ENCODE measurements at regions of chr5 and their contacts with region 1.

Region 1: DNA sequence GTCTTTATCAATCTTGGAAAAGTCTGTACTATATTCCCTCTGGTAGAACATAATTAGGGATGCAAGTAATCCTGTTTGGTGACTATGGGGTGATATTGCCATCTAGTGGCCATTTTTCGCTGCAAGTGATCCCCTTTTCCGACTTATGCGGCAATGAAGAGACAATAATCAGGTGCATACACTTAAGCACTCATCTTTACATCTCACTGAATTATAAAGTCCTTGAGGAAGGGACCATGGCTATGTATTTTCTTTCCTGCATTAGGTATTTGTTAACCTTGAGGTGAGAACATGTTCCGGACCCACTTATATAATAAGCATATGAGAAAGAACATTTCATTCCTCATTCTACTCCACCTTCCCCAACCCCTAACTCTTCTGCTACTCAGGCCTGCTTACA is 19.6 kb upstream of the LIX1 start:
- DNase-seq: peak; percentile 80
- H3K4me3 Mint-ChIP-seq: no peak overlapping the region
- H3K27ac Mint-ChIP-seq: no peak overlapping the region
- H3K4me1 Mint-ChIP-seq: peaks cover 5% of the 10 kb centered on the region
- H3K27me3 Mint-ChIP-seq: peaks cover 11% of the 10 kb centered on the region
- CTCF ChIP-seq: peak; percentile 81

Region 2: DNA sequence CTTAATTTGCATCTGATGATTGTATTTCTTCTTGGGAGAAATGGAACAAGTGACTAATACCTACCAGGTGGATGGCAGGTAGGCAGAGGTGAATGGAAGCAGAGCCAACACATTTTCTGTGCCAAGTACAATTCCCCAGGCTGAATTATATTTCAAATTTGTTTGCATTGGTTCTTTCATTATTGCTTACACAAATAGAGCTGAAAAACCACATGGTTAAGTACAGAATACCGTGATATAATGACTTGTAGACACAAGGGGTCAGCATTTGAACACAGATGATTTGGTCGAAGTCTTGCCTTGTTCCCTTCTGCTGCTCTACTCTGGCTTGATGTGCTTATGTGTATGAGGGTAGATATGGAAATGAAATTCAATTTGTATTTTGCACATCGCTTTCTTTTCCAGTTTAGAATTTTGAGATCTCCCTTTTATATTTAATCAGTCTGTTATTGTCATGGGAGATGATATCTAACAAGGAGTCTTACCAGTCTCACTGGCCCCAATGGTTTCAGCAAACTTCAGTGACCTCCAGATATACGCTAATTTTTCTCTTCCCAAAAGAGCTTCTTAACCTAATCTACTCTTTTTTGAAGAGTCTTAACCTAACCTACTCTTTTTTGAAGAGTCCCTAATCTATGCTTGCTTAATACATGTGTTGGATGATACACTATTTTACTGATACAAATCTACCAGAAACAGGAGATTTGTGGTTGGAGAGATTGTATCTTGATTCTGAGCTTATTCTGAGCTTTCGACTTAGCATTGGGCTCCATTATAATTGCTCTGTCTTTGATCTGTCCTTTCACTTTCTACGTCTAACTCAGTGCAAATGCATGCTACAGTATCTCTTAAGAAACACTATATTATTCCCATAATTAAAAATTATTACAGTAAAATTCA is 817.1 kb before region 1 on chr5:
- CTCF ChIA-PET with region 1: no interaction called
- POLR2A ChIA-PET with region 1: no interaction called
- intact Hi-C with region 1: loop called (anchors 10 kb)
- DNase-seq: peak; percentile 83
- H3K4me3 Mint-ChIP-seq: no peak overlapping the region
- H3K27ac Mint-ChIP-seq: no peak overlapping the region
- H3K4me1 Mint-ChIP-seq: peaks cover 16% of the 10 kb centered on the region
- H3K27me3 Mint-ChIP-seq: no peaks in the 10 kb centered on the region
- CTCF ChIP-seq: peak; percentile 67

Region 3: GRCh38 chr5:96752341-96753016 is 409.6 kb before region 1 on chr5:
- CTCF ChIA-PET with region 1: interaction called, 19 read pairs
- POLR2A ChIA-PET with region 1: no interaction called
- intact Hi-C with region 1: loop called (anchors 1 kb)
- DNase-seq: peak; percentile 70
- H3K4me3 Mint-ChIP-seq: no peak overlapping the region
- H3K27ac Mint-ChIP-seq: no peak overlapping the region
- H3K4me1 Mint-ChIP-seq: no peaks in the 10 kb centered on the region
- H3K27me3 Mint-ChIP-seq: no peaks in the 10 kb centered on the region
- CTCF ChIP-seq: no peak

Region 4: GRCh38 chr5:96934708-96935558 is 227.1 kb before region 1 on chr5:
- CTCF ChIA-PET with region 1: interaction called, 4 read pairs
- POLR2A ChIA-PET with region 1: interaction called, 5 read pairs
- intact Hi-C with region 1: loop called (anchors 5 kb)
- DNase-seq: peak; percentile 96
- H3K4me3 Mint-ChIP-seq: peak overlapping the region; percentile 96
- H3K27ac Mint-ChIP-seq: peak overlapping the region; percentile 82
- H3K4me1 Mint-ChIP-seq: peaks cover 23% of the 10 kb centered on the region
- H3K27me3 Mint-ChIP-seq: no peaks in the 10 kb centered on the region
- CTCF ChIP-seq: no peak

Region 5: GRCh38 chr5:96997265-96997859 is 164.7 kb before region 1 on chr5:
- CTCF ChIA-PET with region 1: interaction called, 13 read pairs
- POLR2A ChIA-PET with region 1: no interaction called
- intact Hi-C with region 1: loop called (anchors 5 kb)
- DNase-seq: peak; percentile 50
- H3K4me3 Mint-ChIP-seq: no peak overlapping the region
- H3K27ac Mint-ChIP-seq: no peak overlapping the region
- H3K4me1 Mint-ChIP-seq: no peaks in the 10 kb centered on the region
- H3K27me3 Mint-ChIP-seq: no peaks in the 10 kb centered on the region
- CTCF ChIP-seq: peak; percentile 36

Region 6: DNA sequence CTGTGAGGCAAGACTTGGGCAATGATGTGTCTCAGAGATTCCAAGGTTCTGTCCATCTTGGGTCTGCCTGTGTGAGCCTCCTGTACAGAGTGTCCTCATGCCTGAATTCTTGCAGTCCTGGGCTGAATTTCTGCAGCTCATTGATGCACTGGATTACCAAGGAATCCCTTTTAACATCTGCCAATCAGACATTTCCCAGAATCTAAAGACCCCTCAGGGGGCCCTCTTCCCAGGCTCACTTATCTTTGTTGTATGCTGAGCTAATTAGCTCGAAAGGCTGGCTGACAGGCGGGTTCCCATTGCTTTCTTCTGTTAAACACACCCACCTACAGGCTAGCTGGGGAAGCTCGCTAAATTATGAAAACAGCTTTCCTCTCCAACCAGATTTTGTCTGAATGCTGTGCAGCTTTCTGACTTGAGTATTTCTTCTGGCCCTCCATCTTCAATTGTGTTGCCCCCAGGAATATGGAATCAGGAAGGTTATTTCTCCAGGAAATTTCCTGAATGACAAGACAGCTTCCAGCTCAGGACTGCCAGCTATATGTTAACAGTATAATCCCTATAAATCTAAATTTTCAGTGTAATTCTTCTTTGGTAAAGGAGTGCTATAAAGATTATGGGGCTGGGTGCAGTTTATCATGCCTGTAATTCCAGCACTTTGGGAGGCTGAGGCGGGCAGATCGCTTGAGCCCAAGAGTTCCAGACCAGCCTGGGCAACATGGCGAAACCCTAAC is 19.4 kb before region 1 on chr5 and contains the start of gene LIX1:
- CTCF ChIA-PET with region 1: interaction called, 31 read pairs
- POLR2A ChIA-PET with region 1: interaction called, 4 read pairs
- intact Hi-C with region 1: no loop called
- DNase-seq: peak; percentile 55
- H3K4me3 Mint-ChIP-seq: no peak within 1 kb of the TSS
- H3K27ac Mint-ChIP-seq: no peak within 1 kb of the TSS
- H3K4me1 Mint-ChIP-seq: no peaks in the 10 kb centered on the region
- H3K27me3 Mint-ChIP-seq: peaks cover 37% of the 10 kb centered on the region
- CTCF ChIP-seq: peak; percentile 52
- total RNA-seq, gene LIX1: not detected in 2 replicates

Measured in MCF 10A (cell line).